ENCODE measurements at regions of chr16 and their contacts with region 1.

Region 1: DNA sequence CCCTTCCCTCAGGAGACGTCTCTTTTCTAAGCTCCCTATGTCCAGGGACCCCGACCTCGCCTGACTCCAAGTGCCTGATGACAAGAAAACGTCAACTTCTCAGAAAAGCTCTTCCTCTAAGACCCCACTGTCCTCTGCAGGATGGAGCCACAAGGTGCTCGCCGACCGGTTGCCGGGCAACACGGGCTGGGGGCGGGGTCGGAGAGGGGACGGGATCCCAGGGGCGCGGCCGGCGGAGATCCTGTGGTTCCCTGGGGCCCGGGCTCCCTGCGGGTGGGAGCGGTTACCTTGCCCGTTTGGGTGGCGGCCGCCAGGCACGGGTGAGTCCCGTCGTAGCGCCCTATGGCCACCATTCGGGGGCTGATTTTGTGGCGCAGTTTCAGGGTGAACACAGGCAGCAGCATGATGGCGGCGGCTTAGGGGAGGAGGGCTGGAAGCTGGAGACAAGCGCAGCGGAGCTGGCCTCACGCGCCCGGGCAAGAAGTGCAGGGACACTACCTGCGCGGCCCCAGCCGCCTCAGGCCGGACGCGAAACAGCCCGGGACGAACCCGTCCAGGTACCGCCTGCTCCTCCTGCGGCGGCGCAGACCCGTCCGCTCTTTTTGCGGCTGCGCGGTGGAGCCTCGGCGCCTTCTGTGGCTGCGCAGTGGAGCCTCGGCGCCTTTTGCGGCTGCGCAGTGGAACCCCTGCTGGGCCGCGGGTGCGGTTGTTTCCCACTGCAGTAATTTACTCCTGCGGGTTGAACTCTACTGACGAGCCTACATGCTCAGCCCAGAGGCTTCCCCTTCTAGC is at the start of gene BBS2:
- DNase-seq: peak; percentile 93
- ATAC-seq: peak; percentile 97 to 99
- H3K4me3 ChIP-seq: peak within 1 kb of the TSS; percentile 95
- H3K27ac ChIP-seq: peak within 1 kb of the TSS; percentile 88
- H3K4me1 ChIP-seq: peaks cover 27% of the 10 kb centered on the region
- H3K27me3 ChIP-seq: no peaks in the 10 kb centered on the region
- CTCF ChIP-seq: peak; percentile 13
- total RNA-seq, gene BBS2: 42.2 TPM

Region 2: DNA sequence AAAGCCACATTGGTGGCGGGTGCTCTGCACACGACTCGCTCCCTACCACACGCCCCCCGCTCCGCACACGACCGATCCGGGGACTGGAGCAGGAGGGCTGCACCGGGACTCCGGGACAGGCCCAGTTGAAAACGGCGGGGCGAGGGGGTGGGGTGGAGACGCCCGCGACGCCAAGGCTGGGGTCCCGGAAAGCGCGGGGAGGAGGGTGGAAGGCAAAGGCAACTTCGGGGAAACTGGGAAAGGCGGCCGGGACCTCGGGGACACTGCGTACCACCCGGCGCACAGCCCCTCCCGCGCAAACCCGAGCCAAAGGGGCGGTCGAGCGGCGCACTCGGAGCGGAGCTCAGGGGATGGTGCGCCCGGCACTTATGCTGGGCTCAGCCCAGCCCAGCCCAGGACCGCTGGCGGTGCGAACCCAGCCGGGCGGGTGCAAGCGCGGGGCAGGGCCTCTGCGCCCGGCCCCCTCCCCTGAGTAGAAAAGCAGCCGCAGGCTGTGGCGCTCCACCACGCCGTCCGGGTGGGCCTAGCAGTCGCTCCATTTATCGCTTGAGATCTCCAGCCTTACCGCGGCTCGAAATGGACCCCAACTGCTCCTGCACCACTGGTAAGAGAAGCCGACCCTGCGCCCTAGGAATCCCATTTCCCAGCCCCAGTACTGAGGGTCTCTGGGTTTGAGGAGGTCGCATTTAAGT is 112.6 kb after region 1 on chr16 and contains the start of gene MT1M:
- intact Hi-C with region 1: no loop called
- DNase-seq: peak; percentile 73
- ATAC-seq: peak; percentile 85
- H3K4me3 ChIP-seq: peak within 1 kb of the TSS; percentile 61
- H3K27ac ChIP-seq: peak within 1 kb of the TSS; percentile 78
- H3K4me1 ChIP-seq: peaks cover 29% of the 10 kb centered on the region
- H3K27me3 ChIP-seq: peaks cover 47% of the 10 kb centered on the region
- CTCF ChIP-seq: no peak
- total RNA-seq, gene MT1M: 29.8 TPM

Region 3: DNA sequence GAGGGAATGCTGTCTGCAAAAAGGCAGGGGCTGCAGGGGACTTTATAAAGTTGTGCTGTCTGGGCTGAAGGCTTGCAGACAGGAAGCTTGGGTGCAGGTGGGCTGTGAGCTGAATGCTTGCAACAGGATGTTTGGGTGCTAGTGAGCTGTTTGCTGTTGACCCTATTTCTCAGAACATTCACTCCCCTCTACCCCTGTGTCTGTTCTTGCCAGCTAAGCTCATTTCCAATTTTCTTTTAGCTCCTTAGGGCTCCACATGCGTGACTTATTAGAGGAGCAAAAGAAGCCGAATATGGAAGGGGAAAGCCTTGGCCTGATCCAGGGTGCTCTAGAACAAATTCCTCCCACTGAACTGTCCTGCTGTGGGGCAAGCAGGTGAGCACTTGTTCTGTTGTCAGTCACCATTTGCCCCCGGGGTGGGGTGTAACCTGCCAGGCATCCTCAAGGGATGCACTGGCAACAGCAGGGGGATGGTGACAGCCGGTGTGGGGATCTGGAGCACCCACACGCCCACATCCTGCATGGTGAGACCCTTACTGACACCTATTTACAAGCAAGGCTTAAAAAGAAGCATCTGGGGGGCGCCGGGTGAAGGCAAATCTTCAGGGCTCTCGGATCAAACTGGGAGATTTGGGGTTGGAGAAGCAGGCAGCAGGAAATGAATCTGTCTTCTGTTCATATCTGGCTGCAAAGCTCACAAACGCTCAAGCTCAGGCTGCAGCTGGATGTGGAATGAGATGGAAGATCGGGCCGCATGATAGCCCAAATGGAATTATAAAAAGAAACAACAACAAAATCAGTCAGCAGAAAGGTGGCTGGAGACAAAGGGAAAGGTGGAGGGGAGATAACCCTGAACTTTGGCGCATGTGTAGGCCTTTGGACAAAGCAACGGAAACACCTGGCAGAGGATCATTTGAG is 189.1 kb after region 1 on chr16:
- intact Hi-C with region 1: loop called (anchors 10 kb)
- DNase-seq: no peak
- ATAC-seq: no peak
- H3K4me3 ChIP-seq: no peak overlapping the region
- H3K27ac ChIP-seq: no peak overlapping the region
- H3K4me1 ChIP-seq: no peaks in the 10 kb centered on the region
- H3K27me3 ChIP-seq: no peaks in the 10 kb centered on the region
- CTCF ChIP-seq: no peak

Measured in lower lobe of right lung (tissue), 2 donors.